Activated CD4-positive, alpha-beta T cell treated with anti-CD3 and anti-CD28 coated beads, Interleukin-2, amount 10 ng/mL, durations not matched to agents 24 days and 14 days (primary cell): ENCODE measurements at regions of chr12 and their contacts with region 1.

Region 1: DNA sequence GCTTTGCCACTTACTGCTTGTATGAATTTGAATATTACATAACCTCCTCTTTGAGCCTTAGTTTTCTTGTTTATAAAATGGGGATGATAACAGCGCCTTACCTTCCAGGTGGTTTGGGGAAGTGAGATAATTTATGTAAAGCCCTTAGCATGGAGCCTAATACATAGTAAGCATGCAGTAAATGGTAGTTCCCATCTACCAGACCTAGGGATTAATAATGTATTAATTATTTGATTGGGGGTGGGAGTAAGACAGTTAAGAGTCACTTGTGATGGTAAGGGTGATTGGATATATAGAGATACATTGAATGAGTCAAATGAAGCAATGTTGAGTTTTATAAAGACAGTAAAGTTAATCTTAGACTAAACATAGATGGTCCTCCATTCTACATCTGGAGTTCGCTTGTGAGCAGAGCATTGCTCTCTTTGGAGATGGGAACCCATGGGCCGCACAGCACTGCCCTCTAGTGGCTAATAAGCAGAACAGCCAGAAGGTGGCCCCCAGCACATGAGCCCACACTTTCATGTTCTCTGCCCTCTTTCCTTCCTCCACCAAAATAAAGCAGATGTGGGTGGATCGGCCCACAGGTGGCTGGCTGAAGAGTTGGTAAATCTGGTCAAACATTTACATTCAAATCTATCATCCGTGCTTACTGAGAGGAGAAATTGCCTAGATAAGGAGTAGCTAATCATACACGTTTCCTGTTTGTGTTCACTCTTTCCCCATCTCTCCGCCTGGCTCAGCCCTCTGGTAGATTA is 26.5 kb upstream of the TAMALIN start:
- DNase-seq: peak; percentile 89
- H3K4me3 Mint-ChIP-seq: no peak overlapping the region
- H3K27ac Mint-ChIP-seq: no peak overlapping the region
- H3K4me1 Mint-ChIP-seq: peaks cover 30% of the 10 kb centered on the region
- H3K27me3 Mint-ChIP-seq: peaks cover 3% of the 10 kb centered on the region

Region 2: GRCh38 chr12:51926718-51927117 is 53.5 kb before region 1 on chr12:
- intact Hi-C with region 1: loop called (anchors 1 kb)
- DNase-seq: peak; percentile 83
- H3K4me3 Mint-ChIP-seq: no peak overlapping the region
- H3K27ac Mint-ChIP-seq: no peak overlapping the region
- H3K4me1 Mint-ChIP-seq: peaks cover 8% of the 10 kb centered on the region
- H3K27me3 Mint-ChIP-seq: peaks cover 4% of the 10 kb centered on the region